Transverse colon (tissue), 4 donors: ENCODE measurements at regions of chr1 and their contacts with region 1.

Region 1: DNA sequence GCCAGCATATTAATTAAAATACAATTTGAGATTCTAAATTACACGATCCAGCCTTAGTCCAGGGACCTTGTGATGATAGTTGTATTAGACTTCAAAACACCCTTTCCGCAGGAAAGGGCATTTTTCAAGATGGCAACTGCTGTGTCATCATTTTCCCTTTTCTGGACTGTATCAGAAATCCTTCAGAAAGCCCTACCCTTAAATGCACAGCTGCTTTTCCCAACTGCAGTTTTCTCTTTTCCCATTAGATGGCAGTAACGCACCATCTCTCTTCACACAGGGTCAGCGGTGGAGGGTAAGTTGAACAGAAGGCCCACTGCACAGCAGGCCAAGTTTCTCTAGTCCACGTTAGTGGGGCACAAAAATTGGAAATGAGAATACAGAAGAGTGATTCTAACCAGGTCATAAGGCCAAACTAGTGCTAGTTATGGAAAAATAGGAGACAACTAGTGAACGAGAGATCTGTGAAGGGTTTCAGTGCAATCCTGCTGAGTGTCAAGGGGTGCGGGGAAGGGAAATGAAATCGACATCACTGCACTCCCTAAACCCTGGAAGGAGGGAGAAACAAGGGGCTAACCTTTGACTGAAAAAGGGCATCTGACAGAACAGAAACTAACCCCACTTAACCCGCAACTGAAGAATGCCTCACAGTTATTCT is 22.1 kb upstream of the TDRD10 start:
- DNase-seq: peak; percentile 69
- H3K4me3 ChIP-seq: no peak overlapping the region
- H3K27ac ChIP-seq: peak overlapping the region in 1 of 4 donors; percentile 85
- H3K4me1 ChIP-seq: peaks cover 10 to 44% (median 13%) of the 10 kb centered on the region in 4 donors
- H3K27me3 ChIP-seq: no peaks in the 10 kb centered on the region
- CTCF ChIP-seq: peak; percentile 92 to 97 (median 95)
- EP300 ChIP-seq: no peak
- POLR2A ChIP-seq: no peak

Region 2: DNA sequence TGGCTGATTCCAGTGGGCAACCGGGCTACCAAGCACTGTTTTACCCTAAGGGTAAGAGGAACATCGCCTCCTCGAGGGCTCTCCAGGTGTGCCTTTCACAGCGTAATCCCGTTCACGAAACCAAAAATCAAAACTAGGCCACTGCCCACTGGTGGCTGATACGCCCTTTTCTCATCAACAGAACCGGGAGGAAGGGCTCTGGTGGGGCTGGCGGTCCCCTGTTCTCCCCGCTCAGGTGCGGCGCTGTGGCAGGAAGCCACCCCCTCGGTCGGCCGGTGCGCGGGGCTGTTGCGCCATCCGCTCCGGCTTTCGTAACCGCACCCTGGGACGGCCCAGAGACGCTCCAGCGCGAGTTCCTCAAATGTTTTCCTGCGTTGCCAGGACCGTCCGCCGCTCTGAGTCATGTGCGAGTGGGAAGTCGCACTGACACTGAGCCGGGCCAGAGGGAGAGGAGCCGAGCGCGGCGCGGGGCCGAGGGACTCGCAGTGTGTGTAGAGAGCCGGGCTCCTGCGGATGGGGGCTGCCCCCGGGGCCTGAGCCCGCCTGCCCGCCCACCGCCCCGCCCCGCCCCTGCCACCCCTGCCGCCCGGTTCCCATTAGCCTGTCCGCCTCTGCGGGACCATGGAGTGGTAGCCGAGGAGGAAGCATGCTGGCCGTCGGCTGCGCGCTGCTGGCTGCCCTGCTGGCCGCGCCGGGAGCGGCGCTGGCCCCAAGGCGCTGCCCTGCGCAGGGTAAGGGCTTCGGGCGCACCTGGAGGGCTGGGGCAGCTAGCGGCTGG is 74.7 kb before region 1 on chr1 and contains the start of gene IL6R:
- in situ Hi-C with region 1: loop called in 2 of 4 experiments (anchors 10 kb)
- intact Hi-C with region 1: no loop called
- DNase-seq: peak; percentile 94
- H3K4me3 ChIP-seq: peak within 1 kb of the TSS; percentile 74 to 82 (median 78)
- H3K27ac ChIP-seq: peak within 1 kb of the TSS; percentile 95 to 99 (median 99)
- H3K4me1 ChIP-seq: peaks cover 30 to 52% (median 40%) of the 10 kb centered on the region in 4 donors
- H3K27me3 ChIP-seq: no peaks in the 10 kb centered on the region
- CTCF ChIP-seq: peak; percentile 19 to 68 (median 61)
- EP300 ChIP-seq: peak; percentile 27
- POLR2A ChIP-seq: peak; percentile 84
- total RNA-seq, gene IL6R: 10.7 to 107 (median 77.3) TPM

Region 3: DNA sequence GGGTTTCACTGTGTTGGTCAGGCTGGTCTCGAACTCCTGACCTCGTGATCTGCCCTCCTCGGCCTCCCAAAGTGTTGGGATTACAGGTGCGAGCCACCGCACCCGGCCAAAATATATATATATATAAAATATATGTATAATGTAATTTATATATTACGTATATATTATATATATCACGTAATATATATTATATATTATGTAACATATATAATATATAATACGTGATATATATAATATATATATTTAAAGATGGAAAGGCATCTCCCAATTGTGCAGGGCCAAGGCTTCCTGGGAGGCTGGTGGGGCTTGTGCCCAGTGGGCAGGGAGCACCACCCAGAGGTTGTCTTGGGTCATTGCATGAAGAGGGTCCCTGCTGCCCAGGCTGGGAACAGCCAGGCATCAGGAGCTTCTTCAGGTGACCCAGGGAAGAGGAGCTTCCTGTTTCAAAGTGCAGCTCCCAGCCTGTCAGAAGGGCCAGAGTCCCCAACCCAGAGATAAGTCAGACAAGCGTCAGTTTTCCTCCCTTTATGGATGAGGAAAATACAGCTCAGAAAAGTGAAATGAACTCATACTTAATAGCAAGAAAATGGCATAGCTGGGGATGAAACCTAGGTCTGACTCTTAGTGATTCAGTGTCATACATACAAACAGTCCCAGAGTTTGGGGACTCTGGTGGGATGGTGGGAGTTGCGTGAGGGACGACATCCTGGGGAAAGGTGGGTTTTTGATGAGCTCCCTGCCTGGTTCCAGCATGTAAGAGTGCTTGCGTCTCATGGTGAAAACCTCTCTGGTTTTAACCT is 66.6 kb after region 1 on chr1:
- in situ Hi-C with region 1: loop called in 1 of 4 experiments (anchors 10 kb)
- intact Hi-C with region 1: loop called (anchors 1 kb)
- DNase-seq: peak; percentile 51
- H3K4me3 ChIP-seq: no peak overlapping the region
- H3K27ac ChIP-seq: no peak overlapping the region
- H3K4me1 ChIP-seq: peaks cover 0 to 24% (median 4%) of the 10 kb centered on the region in 4 donors
- H3K27me3 ChIP-seq: no peaks in the 10 kb centered on the region
- CTCF ChIP-seq: peak; percentile 63 to 78 (median 67)
- EP300 ChIP-seq: no peak
- POLR2A ChIP-seq: no peak

Region 4: DNA sequence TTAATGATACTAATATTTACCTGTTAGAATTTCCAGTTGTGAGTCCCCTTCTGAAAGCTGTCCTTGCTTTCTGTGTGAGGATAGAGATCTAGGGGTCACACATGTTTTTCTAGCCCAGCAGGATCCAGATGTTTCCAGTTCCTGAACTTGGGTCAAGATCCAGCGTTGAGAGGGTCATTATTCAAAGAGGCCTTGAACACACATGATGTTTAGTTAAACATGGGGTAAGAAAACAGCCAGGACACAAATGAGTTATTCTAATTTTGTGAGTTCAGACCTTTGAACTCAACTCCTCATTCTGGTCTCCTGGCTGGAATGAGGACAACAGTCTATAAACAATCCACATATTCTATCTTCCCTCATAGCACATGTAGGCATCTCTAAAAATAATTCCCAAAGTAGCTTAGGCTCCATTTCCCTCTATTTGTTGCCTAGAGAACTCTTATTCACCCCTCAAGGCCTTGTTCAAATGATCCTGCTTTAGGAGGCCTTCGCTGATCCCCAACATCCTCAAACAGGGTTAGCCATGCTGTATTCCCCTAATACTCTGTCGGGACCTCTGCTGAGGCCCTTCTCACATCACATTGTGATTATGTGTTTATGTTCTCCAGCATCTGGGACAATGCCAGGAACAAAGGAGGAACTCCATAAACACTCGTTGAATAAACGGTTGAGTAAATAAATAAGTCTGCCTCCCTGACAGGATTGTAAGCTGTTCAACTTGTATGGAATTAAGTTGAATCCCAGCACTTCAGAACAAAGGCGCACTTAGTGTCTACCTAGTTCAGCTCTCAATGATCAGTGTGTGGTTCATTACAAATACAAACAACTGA is 405.2 kb after region 1 on chr1:
- in situ Hi-C with region 1: loop called in 1 of 4 experiments (anchors 10 kb)
- intact Hi-C with region 1: no loop called
- DNase-seq: no peak
- H3K4me3 ChIP-seq: no peak overlapping the region
- H3K27ac ChIP-seq: no peak overlapping the region
- H3K4me1 ChIP-seq: no peaks in the 10 kb centered on the region
- H3K27me3 ChIP-seq: no peaks in the 10 kb centered on the region
- CTCF ChIP-seq: no peak
- EP300 ChIP-seq: no peak
- POLR2A ChIP-seq: no peak

Region 5: DNA sequence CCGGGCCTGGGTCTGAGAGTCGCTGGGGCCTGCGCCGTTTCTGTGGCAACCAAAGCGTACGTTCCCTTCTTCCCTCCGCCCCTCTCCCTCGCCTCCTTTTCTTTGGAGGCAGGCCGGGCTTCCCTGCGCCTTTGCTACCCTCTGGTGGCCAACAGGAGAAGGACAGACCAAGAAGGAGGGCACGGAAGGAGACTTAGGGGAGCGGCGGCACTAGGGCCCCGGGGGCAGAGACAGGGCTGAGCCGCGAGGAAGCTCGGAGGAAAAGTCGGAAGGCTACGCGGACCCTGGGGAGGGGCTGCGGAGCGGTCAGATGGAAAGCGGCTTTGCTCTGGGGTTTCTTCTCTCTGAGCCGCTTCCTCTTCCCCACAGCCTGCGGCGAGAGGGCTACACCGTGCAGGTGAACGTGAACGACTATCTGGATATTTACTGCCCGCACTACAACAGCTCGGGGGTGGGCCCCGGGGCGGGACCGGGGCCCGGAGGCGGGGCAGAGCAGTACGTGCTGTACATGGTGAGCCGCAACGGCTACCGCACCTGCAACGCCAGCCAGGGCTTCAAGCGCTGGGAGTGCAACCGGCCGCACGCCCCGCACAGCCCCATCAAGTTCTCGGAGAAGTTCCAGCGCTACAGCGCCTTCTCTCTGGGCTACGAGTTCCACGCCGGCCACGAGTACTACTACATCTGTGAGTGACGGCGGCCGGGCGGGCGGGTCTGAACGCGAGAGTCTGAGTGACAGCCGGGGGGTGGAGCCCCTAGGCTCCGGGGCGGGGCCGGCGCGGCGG is 605.0 kb after region 1 on chr1:
- in situ Hi-C with region 1: no loop called
- intact Hi-C with region 1: loop called (anchors 10 kb)
- DNase-seq: peak; percentile 94
- H3K4me3 ChIP-seq: peak overlapping the region; percentile 45 to 78 (median 53)
- H3K27ac ChIP-seq: peak overlapping the region; percentile 90 to 94 (median 92)
- H3K4me1 ChIP-seq: peaks cover 42 to 60% (median 57%) of the 10 kb centered on the region in 4 donors
- H3K27me3 ChIP-seq: peaks cover 43% of the 10 kb centered on the region
- CTCF ChIP-seq: peak; percentile 91 to 99 (median 94)
- EP300 ChIP-seq: peak; percentile 23
- POLR2A ChIP-seq: peak; percentile 83